ENCODE measurements at regions of chr1 and their contacts with region 1.

Region 1: DNA sequence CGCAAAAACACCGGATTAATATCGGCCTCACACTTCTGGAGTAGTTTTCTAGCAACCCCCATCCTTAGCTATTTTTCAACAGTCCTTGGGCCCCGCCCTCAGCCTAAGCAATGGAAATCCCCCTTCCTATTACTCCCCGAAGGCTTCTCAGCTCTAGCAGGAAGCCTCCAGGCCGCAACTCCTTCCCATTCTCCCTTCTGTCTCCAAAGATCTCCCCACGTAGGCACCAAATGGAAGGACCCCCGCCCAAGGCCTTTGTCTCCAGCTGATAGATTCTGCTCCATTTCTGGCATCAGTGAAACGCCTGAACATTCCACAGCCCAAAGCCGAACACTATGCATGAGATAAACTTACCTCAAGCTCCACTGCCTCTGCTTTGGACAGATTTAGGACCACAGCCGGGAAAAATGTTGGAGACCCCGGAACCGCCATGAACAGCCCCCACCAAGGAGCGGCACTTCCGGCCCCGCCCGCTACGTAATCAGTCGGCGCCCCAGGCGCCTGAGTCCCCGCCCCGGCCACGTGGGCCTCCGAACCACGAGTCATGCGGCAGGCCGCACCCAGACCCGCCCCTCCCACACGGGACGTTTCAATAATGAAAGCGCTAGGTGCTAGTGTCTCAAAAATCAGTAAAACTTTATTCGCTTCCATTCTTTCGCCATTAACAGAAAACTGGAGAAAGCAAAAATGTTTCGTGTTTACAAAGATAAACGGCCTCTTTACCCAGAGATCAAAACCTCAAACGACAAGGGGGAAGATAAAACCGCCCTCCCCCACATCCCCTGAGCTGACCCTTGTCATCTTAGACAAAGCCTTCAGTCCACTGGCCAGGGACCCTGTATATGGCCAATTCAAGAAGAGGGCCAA is at the start of gene NRAS:
- DNase-seq: peak; percentile 97
- ATAC-seq: peak; percentile 99
- total RNA-seq, gene NRAS: 7.2 TPM

Region 2: GRCh38 chr1:114780344-114781226 is 64.0 kb after region 1 on chr1 and contains the start of gene SIKE1:
- intact Hi-C with region 1: loop called (anchors 2 kb)
- DNase-seq: peak; percentile 96
- ATAC-seq: peak; percentile 98
- total RNA-seq, gene SIKE1: 34.2 TPM